Natural killer cell (primary cell): ENCODE measurements at regions of chr17 and their contacts with region 1.

Region 1: DNA sequence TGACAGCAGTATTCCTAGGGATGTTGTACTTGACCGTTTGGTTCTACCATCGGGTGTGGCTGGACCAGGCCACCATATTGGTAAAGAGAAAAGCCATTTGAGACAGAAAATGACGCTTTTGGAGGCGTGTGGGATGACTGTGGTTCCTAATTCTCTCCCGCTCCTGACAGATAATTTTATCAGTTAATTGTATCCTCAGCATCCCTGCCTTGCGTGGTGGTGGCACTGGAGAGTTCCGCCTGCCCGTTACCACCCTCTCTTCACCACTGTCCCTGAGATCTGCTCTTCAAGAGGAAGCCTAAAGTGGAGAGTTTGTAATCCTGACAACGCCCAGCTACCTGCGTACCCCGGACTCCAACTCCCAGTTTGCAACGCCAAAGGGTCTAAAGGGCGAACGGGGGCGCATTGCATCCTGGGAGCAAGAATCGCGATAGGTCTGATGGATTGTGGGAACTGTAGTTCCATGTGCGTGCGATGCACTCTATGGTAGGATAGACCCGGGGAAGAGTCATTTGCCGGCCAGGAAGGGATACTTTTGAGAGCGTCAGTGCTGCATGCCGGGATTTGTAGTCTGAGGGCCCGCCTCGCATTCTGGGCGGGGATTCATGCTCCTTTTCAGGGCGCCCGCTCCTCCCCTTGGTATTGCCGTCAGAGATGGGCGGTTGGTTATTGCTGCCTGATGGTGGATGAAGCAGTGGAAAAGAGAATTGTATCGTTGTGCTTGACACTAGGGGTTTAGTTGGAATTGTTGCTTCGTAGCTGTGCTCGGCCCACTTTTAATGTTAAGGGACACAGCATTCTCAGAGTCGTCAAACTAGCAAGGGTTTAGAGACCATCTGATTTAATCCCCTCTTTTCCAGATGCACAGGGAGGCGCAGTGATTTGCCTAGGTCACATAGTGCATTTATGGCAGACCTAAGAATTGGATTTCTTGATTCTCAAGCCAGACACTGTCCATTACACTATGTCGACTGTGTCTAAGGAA is 965 bp upstream of the PHF12 start:
- DNase-seq: peak; percentile 87 to 99
- ATAC-seq: peak; percentile 62 to 87 (median 71)
- H3K4me3 ChIP-seq: peak overlapping the region; percentile 65
- H3K4me3 Mint-ChIP-seq: no peak overlapping the region
- H3K27ac ChIP-seq: peak overlapping the region; percentile 97
- H3K27ac Mint-ChIP-seq: no peak overlapping the region
- H3K4me1 ChIP-seq: peaks cover 24% of the 10 kb centered on the region
- H3K4me1 Mint-ChIP-seq: peaks cover 16 to 21% of the 10 kb centered on the region in 2 donors
- H3K27me3 ChIP-seq: no peaks in the 10 kb centered on the region
- H3K27me3 Mint-ChIP-seq: no peaks in the 10 kb centered on the region
- CTCF ChIP-seq: no peak

Region 2: GRCh38 chr17:28726226-28727130 is 225.8 kb before region 1 on chr17 and contains the start of gene TLCD1:
- intact Hi-C with region 1: loop called (anchors 1 kb)
- DNase-seq: peak; percentile 88 to 94
- ATAC-seq: peak; percentile 58 to 79 (median 59)
- H3K4me3 ChIP-seq: peak within 1 kb of the TSS; percentile 71
- H3K4me3 Mint-ChIP-seq: peak within 1 kb of the TSS; percentile 96
- H3K27ac ChIP-seq: peak within 1 kb of the TSS; percentile 99
- H3K27ac Mint-ChIP-seq: peak within 1 kb of the TSS; percentile 96
- H3K4me1 ChIP-seq: peaks cover 54% of the 10 kb centered on the region
- H3K4me1 Mint-ChIP-seq: peaks cover 38 to 41% of the 10 kb centered on the region in 2 donors
- H3K27me3 ChIP-seq: no peaks in the 10 kb centered on the region
- H3K27me3 Mint-ChIP-seq: no peaks in the 10 kb centered on the region
- CTCF ChIP-seq: peak; percentile 99
- total RNA-seq, gene TLCD1: 1.0 TPM in 1 of 3 donors, not detected in the others

Region 3: GRCh38 chr17:28902819-28903545 is 49.3 kb before region 1 on chr17 and contains the start of gene DHRS13:
- intact Hi-C with region 1: loop called (anchors 2 kb)
- DNase-seq: peak; percentile 92 to 98
- ATAC-seq: peak; percentile 92 to 99 (median 95)
- H3K4me3 ChIP-seq: peak within 1 kb of the TSS; percentile 69
- H3K4me3 Mint-ChIP-seq: peak within 1 kb of the TSS; percentile 83
- H3K27ac ChIP-seq: peak within 1 kb of the TSS; percentile 48
- H3K27ac Mint-ChIP-seq: peak within 1 kb of the TSS; percentile 69 to 84
- H3K4me1 ChIP-seq: peaks cover 30% of the 10 kb centered on the region
- H3K4me1 Mint-ChIP-seq: peaks cover 19 to 47% of the 10 kb centered on the region in 2 donors
- H3K27me3 ChIP-seq: no peaks in the 10 kb centered on the region
- H3K27me3 Mint-ChIP-seq: no peaks in the 10 kb centered on the region
- CTCF ChIP-seq: peak; percentile 99
- total RNA-seq, gene DHRS13: 22.5 to 27.3 (median 23.2) TPM

Region 4: GRCh38 chr17:28982131-28982951 is 30.1 kb after region 1 on chr17:
- intact Hi-C with region 1: loop called (anchors 1 kb)
- DNase-seq: peak; percentile 58 to 92
- ATAC-seq: peak; percentile 82 to 95 (median 91)
- H3K4me3 ChIP-seq: no peak overlapping the region
- H3K4me3 Mint-ChIP-seq: peak overlapping the region; percentile 70
- H3K27ac ChIP-seq: peak overlapping the region; percentile 85
- H3K27ac Mint-ChIP-seq: peak overlapping the region; percentile 97 to 99
- H3K4me1 ChIP-seq: peaks cover 31% of the 10 kb centered on the region
- H3K4me1 Mint-ChIP-seq: peaks cover 18 to 26% of the 10 kb centered on the region in 2 donors
- H3K27me3 ChIP-seq: peaks cover 2% of the 10 kb centered on the region
- H3K27me3 Mint-ChIP-seq: no peaks in the 10 kb centered on the region
- CTCF ChIP-seq: no peak

Region 5: GRCh38 chr17:29124925-29125273 is 172.6 kb after region 1 on chr17:
- intact Hi-C with region 1: no loop called
- DNase-seq: no peak
- ATAC-seq: no peak
- H3K4me3 ChIP-seq: no peak overlapping the region
- H3K4me3 Mint-ChIP-seq: no peak overlapping the region
- H3K27ac ChIP-seq: no peak overlapping the region
- H3K27ac Mint-ChIP-seq: peak overlapping the region in 1 of 2 donors; percentile 68
- H3K4me1 ChIP-seq: peaks cover 15% of the 10 kb centered on the region
- H3K4me1 Mint-ChIP-seq: peaks cover 0 to 19% of the 10 kb centered on the region in 2 donors
- H3K27me3 ChIP-seq: no peaks in the 10 kb centered on the region
- H3K27me3 Mint-ChIP-seq: no peaks in the 10 kb centered on the region
- CTCF ChIP-seq: no peak